ENCODE measurements at regions of chr7 and their contacts with region 1.

Region 1: DNA sequence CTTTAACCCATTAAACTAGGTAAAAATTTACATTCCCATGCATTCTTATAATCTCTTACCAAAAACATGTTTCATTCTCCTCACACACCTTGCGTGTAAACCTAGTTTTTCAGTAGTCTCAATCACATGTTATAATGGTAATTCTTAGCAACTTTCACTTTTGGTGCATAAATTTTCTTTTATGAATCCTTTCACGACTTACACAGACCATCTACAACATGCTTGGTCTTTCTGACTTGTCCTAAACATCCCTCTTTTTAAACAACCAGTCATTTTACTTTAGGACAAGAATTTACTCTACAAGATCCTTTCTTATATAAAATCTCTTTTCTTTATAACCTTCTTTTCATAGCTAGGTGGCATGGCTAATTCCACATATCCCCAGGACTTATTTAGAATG is 25.8 kb downstream of the FBXL13 start:
- H3K4me3 Mint-ChIP-seq: no peak overlapping the region
- H3K27ac Mint-ChIP-seq: no peak overlapping the region
- H3K4me1 Mint-ChIP-seq: peaks cover 5% of the 10 kb centered on the region
- H3K27me3 Mint-ChIP-seq: no peaks in the 10 kb centered on the region

Region 2: GRCh38 chr7:102874166-102874829 is 174.5 kb before region 1 on chr7:
- intact Hi-C with region 1: loop called (anchors 10 kb)
- H3K4me3 Mint-ChIP-seq: no peak overlapping the region
- H3K27ac Mint-ChIP-seq: peak overlapping the region; percentile 12
- H3K4me1 Mint-ChIP-seq: peaks cover 34% of the 10 kb centered on the region
- H3K27me3 Mint-ChIP-seq: no peaks in the 10 kb centered on the region

Region 3: DNA sequence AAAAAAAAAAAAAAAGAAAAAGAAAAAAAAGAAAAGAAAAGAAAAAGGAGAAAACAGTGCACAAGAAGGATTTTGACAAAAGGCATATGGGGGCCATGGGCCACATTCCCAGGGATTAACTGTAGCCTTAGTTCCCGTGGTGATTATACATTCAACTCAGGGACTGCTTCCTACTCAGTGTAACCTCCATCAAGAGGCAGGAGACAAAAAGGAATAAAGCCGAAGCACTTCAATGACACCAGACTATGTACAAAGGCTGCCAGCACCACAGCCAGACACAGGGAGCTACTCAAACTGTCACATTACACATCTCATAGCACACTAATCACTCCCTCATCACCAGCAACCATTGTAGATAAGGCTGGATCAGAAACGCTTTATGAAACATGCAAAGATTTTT is 243.3 kb after region 1 on chr7:
- intact Hi-C with region 1: no loop called
- H3K4me3 Mint-ChIP-seq: no peak overlapping the region
- H3K27ac Mint-ChIP-seq: no peak overlapping the region
- H3K4me1 Mint-ChIP-seq: peaks cover 7% of the 10 kb centered on the region
- H3K27me3 Mint-ChIP-seq: no peaks in the 10 kb centered on the region

Region 4: GRCh38 chr7:103379270-103379975 is 330.6 kb after region 1 on chr7:
- intact Hi-C with region 1: no loop called
- H3K4me3 Mint-ChIP-seq: no peak overlapping the region
- H3K27ac Mint-ChIP-seq: peak overlapping the region; percentile 22
- H3K4me1 Mint-ChIP-seq: peaks cover 5% of the 10 kb centered on the region
- H3K27me3 Mint-ChIP-seq: no peaks in the 10 kb centered on the region